ENCODE measurements at regions of chr19 and their contacts with region 1.

Region 1: DNA sequence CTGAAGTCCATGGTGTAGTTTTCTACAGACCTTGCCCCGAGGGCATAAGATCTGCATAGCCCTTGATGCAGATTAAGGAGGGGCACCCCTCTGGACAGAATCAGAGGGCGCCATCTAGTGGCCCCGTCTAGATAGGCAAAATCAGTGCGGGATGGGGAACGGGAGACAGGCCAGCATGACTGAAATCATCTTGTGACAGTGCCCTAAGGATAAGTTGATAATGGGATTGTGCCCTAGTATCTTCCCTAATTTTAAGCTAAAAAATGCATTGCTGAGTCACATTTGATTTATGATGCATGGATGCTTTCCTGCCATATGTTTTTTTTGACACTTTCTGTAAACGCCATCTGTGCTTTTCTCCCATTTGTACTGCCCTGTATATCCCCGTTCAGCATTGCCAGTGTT is 19.0 kb upstream of the GPI start:
- DNase-seq: no peak
- H3K4me3 ChIP-seq: no peak overlapping the region
- H3K27ac ChIP-seq: no peak overlapping the region
- H3K27me3 ChIP-seq: no peaks in the 10 kb centered on the region
- CTCF ChIP-seq: peak; percentile 92

Region 2: DNA sequence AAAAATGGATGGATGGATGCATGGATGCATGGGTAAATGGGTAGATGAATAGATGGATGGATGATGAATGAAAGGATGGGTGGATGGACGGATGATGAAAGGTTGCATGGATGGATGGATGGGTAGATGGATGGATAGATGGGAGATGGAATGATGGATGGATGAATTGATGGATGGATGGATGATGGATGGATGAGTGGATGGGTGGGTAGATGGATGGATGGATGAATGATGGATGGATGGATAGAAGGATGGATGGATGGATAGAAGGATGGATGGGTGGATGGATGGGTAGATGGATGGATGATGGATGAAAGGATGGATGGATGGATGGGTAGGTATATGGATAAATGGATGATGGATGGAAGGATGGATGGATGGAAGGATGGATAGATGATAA is 288.8 kb before region 1 on chr19:
- CTCF ChIA-PET with region 1: no interaction called
- POLR2A ChIA-PET with region 1: no interaction called
- DNase-seq: no peak
- H3K4me3 ChIP-seq: no peak overlapping the region
- H3K27ac ChIP-seq: no peak overlapping the region
- H3K27me3 ChIP-seq: no peaks in the 10 kb centered on the region
- CTCF ChIP-seq: no peak

Region 3: DNA sequence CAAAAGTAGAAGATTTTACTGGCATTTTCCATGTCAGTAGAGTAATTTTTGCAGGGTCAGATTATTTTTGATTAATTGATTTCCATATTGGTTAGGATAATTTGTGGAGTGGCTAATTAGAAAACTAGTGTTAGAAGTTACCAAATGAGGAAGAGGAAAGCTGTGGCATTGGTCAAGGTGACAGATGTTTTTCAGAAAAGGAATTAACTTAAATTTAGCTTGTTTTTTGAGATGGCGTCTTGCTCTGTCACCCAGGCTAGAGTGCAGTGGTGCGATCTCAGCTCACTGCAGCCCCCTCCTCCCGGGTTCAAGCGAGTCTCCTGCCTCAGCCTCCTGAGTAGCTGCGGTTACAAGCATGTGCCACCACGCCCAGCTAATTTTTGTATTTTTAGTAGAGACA is 144.8 kb before region 1 on chr19:
- CTCF ChIA-PET with region 1: interaction called, 12 read pairs
- POLR2A ChIA-PET with region 1: no interaction called
- DNase-seq: no peak
- H3K4me3 ChIP-seq: no peak overlapping the region
- H3K27ac ChIP-seq: no peak overlapping the region
- H3K27me3 ChIP-seq: no peaks in the 10 kb centered on the region
- CTCF ChIP-seq: no peak

Region 4: GRCh38 chr19:34220472-34221063 is 125.4 kb before region 1 on chr19:
- CTCF ChIA-PET with region 1: interaction called, 17 read pairs
- POLR2A ChIA-PET with region 1: no interaction called
- DNase-seq: peak; percentile 24
- H3K4me3 ChIP-seq: no peak overlapping the region
- H3K27ac ChIP-seq: no peak overlapping the region
- H3K27me3 ChIP-seq: no peaks in the 10 kb centered on the region
- CTCF ChIP-seq: peak; percentile 73

Region 5: GRCh38 chr19:34232566-34233481 is 113.1 kb before region 1 on chr19:
- CTCF ChIA-PET with region 1: interaction called, 23 read pairs
- POLR2A ChIA-PET with region 1: no interaction called
- DNase-seq: peak; percentile 74
- H3K4me3 ChIP-seq: peak overlapping the region; percentile 45
- H3K27ac ChIP-seq: peak overlapping the region; percentile 85
- H3K27me3 ChIP-seq: no peaks in the 10 kb centered on the region
- CTCF ChIP-seq: no peak

Region 6: GRCh38 chr19:34327851-34328250 is 18.1 kb before region 1 on chr19:
- CTCF ChIA-PET with region 1: interaction called, 46 read pairs
- POLR2A ChIA-PET with region 1: no interaction called
- DNase-seq: no peak
- H3K4me3 ChIP-seq: no peak overlapping the region
- H3K27ac ChIP-seq: no peak overlapping the region
- H3K27me3 ChIP-seq: no peaks in the 10 kb centered on the region
- CTCF ChIP-seq: no peak

Region 7: GRCh38 chr19:34359140-34359953 is 13.4 kb after region 1 on chr19:
- CTCF ChIA-PET with region 1: interaction called, 54 read pairs
- POLR2A ChIA-PET with region 1: no interaction called
- DNase-seq: peak; percentile 95
- H3K4me3 ChIP-seq: peak overlapping the region; percentile 56
- H3K27ac ChIP-seq: peak overlapping the region; percentile 70
- H3K27me3 ChIP-seq: no peaks in the 10 kb centered on the region
- CTCF ChIP-seq: peak; percentile 59

Region 8: DNA sequence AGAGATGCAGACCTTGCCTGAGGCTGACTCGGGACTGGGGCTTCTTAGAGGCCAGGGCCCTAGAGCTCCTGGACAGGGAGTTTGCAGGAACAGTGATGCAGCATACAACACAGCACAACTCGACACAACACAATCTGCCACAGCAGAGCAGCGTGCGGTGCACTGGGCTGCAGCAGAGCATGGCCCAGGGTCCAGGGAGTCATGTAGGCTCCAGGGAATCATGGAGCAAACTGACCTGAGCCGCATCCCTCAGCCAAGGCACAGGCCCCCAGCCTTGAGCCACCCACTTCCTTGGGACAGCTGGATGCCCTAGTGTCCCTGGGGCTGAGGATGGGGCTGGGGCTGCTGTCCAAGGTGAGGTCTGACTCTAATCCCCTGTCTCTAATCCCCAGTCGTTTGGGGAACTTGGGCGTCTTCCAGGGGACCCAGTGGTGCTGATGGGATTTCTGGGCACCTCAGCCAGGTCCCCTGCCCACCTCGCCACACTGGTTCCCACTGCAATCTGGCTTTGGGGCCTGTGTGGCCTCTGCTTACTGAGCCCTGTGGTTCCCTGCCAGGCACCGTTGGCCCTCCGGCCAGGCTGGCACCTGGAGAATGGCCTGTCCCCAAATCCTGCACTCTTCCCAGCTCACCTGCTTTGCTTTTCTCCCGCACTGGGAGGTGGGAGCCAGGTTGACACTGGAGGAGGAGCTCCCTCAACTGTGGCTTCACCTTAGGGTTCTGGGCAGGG is 233.8 kb after region 1 on chr19:
- CTCF ChIA-PET with region 1: no interaction called
- POLR2A ChIA-PET with region 1: no interaction called
- DNase-seq: no peak
- H3K4me3 ChIP-seq: no peak overlapping the region
- H3K27ac ChIP-seq: no peak overlapping the region
- H3K27me3 ChIP-seq: no peaks in the 10 kb centered on the region
- CTCF ChIP-seq: no peak

Measured in AG04450 (cell line).